Right cardiac atrium (tissue), 5 donors: ENCODE measurements at regions of chr22 and their contacts with region 1.

Region 1: GRCh38 chr22:37492428-37493344 is 6.5 kb upstream of the MFNG start:
- DNase-seq: peak in 1 of 3 donors; percentile 58
- ATAC-seq: peak in 1 of 2 donors; percentile 3
- H3K4me3 ChIP-seq: no peak overlapping the region
- H3K27ac ChIP-seq: no peak overlapping the region
- H3K4me1 ChIP-seq: no peaks in the 10 kb centered on the region
- H3K27me3 ChIP-seq: no peaks in the 10 kb centered on the region

Region 2: GRCh38 chr22:37428649-37429586 is 63.8 kb before region 1 on chr22:
- intact Hi-C with region 1: loop called in 1 of 4 experiments (anchors 10 kb)
- DNase-seq: peak in 2 of 3 donors; percentile 40 to 75
- ATAC-seq: peak in 1 of 2 donors; percentile 50
- H3K4me3 ChIP-seq: no peak overlapping the region
- H3K27ac ChIP-seq: no peak overlapping the region
- H3K4me1 ChIP-seq: no peaks in the 10 kb centered on the region
- H3K27me3 ChIP-seq: no peaks in the 10 kb centered on the region